ENCODE measurements at regions of chr10 and their contacts with region 1.

Region 1: DNA sequence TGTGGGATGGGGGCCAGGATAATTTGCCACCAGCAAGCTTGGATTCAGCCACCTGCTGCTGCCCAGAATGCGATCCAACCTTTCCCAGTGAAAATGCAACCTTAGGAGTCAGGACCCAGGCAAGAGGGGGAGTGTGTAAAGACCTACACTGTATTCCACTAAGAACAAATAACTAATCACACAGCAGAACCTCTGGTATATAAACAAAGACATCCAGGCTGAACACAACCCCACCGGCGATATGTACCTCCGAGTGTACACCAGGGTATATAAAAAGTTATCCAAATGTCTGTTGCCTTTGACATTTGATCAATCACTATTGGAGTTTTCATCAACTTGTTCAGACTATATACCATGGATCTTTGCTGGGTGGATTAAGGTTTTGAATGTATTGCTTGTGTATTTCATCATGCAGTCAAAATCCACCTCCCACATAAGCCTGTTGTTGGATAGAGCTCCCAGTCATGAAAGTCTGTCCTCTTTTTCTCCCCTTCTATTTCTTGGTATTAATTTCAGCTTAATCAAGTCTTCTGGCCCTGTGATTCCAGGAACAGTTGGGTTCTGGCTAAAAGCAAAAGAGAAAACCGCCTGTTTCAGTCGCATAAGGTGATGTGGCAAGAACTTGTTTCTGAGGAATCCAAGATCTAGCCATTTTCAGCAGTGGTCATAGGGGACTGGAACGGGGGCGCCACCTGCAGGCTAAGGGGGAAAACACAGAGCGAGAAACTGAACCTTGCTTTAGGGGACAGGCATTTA is 290.7 kb downstream of the CCDC3 start:
- DNase-seq: peak; percentile 74
- H3K4me3 Mint-ChIP-seq: no peak overlapping the region
- H3K27ac Mint-ChIP-seq: peak overlapping the region; percentile 76
- H3K4me1 Mint-ChIP-seq: peaks cover 65% of the 10 kb centered on the region
- H3K27me3 Mint-ChIP-seq: no peaks in the 10 kb centered on the region

Region 2: DNA sequence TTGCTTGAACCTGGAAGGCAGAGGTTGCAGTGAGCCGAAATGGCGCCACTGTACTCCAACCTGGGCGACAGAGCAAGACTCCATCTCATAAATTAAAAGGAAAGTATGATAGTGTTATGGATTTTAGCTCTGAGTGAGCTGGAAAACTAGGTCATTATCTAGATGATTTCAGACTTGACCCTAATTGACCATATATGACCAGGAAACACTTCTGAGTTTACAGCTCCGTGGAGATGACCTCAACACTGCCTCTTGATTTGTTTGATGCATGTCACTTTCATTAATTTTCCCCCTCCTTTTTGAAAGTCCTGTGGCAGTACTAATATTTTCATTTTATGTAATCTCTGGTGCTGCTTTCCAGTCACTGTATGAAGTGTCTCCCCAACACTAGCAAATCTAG is 589.1 kb before region 1 on chr10:
- intact Hi-C with region 1: loop called (anchors 5 kb)
- DNase-seq: no peak
- H3K4me3 Mint-ChIP-seq: peak overlapping the region; percentile 59
- H3K27ac Mint-ChIP-seq: peak overlapping the region; percentile 95
- H3K4me1 Mint-ChIP-seq: peaks cover 34% of the 10 kb centered on the region
- H3K27me3 Mint-ChIP-seq: no peaks in the 10 kb centered on the region

Region 3: DNA sequence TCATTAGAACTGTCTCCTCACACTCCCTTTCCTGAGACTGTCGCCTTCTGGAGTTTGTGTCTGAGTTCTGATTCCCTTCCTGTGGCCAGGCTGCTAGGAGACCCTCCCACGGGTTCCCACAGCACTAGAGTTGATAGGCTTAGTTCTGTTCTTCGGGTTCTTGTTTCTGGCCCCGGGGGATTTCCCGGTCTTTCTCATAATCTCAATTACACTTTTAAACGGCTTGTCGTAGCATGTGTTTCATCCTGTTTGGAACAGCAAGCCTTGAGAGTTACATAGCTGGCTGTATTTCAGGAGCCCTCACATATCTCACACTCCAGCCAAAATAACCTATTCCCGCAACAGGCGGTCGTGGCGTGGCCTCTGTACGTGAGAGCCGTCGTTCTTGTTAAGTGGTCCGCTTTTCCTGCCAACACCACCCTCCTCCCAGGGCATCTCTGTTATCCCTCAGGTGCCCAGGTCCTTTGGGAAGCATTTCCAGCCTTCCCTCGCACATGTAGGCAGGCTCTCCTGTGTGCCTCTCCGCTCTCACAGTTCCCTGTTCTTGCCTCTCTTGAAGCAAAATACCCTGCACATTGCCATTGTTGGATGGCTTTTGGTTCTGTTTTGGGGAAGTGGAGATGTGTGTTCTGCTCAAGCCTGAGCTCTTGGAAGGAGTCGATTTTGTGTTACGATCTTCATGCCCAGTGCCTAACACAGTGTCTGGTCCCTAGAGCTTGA is 468.8 kb before region 1 on chr10:
- intact Hi-C with region 1: loop called (anchors 2 kb)
- DNase-seq: no peak
- H3K4me3 Mint-ChIP-seq: peak overlapping the region; percentile 59
- H3K27ac Mint-ChIP-seq: peak overlapping the region; percentile 80
- H3K4me1 Mint-ChIP-seq: peaks cover 26% of the 10 kb centered on the region
- H3K27me3 Mint-ChIP-seq: no peaks in the 10 kb centered on the region

Region 4: DNA sequence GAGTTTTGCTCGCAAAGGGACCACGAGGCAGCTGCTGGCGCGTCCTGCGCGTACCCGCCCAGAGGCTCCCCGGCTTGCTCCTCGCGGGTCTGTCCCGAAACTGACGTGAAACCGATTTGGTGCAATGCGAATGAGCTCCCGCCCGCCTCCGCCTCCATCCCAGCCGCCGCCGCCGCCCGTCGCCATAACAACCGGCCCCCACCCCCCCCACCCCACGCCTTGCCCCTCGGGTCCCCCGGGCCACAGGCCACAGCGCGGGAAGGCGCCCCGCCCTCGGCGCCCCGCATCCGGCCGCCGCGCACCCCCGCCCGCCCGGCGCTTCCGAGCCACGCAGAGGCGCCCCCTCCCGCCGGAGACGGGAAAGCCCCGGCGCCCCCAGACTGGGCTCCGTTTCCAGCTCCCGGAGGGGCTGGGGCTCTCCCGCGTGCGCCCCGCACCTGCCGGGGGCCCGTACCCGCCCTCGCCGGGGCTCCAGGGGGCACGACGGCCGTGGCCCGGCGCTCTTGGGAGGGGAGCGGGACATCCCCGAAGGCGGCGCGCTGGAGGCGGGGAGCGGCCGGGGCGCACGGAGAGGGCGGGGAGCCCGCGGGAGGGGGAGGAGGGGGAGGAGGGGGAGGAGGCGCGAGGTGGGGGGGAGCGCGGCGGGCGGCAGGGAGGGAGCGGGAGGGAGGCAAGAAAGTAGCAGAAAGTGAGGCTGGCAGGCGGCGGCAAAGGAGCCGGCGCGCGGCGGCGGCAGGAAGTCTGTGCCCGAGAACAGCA is 361.7 kb before region 1 on chr10 and contains the start of gene CAMK1D:
- intact Hi-C with region 1: loop called (anchors 1 kb)
- DNase-seq: peak; percentile 79
- H3K4me3 Mint-ChIP-seq: peak within 1 kb of the TSS; percentile 90
- H3K27ac Mint-ChIP-seq: peak within 1 kb of the TSS; percentile 97
- H3K4me1 Mint-ChIP-seq: peaks cover 37% of the 10 kb centered on the region
- H3K27me3 Mint-ChIP-seq: peaks cover 60% of the 10 kb centered on the region
- total RNA-seq, gene CAMK1D: 6.8 and 7.4 TPM in 2 replicates

Region 5: GRCh38 chr10:12594448-12594944 is 116.3 kb before region 1 on chr10:
- intact Hi-C with region 1: loop called (anchors 5 kb)
- DNase-seq: peak; percentile 64
- H3K4me3 Mint-ChIP-seq: peak overlapping the region; percentile 45
- H3K27ac Mint-ChIP-seq: peak overlapping the region; percentile 90
- H3K4me1 Mint-ChIP-seq: peaks cover 95% of the 10 kb centered on the region
- H3K27me3 Mint-ChIP-seq: no peaks in the 10 kb centered on the region

Region 6: DNA sequence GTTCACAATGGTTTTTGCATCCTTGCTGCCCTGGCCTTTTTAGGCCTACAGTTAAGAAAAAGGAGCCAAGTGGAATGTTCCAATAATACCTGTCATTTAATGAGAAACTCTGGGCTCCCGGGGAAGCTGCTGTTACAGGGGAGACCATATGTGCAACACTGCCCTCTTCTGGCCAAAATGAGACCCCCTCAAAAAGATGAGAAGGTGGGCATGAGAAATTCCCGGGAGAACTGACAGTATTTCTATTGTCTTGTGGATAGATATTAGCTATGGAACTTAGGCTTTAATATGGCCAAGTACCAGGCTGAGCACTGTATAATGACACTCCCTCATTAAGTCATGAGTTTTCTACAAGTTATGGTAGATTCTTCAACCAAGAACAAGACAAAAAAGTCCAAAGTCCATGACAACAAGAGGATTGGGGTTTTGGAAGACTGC is 191.4 kb after region 1 on chr10:
- intact Hi-C with region 1: loop called (anchors 1 kb)
- DNase-seq: peak; percentile 25
- H3K4me3 Mint-ChIP-seq: no peak overlapping the region
- H3K27ac Mint-ChIP-seq: no peak overlapping the region
- H3K4me1 Mint-ChIP-seq: no peaks in the 10 kb centered on the region
- H3K27me3 Mint-ChIP-seq: no peaks in the 10 kb centered on the region

Region 7: DNA sequence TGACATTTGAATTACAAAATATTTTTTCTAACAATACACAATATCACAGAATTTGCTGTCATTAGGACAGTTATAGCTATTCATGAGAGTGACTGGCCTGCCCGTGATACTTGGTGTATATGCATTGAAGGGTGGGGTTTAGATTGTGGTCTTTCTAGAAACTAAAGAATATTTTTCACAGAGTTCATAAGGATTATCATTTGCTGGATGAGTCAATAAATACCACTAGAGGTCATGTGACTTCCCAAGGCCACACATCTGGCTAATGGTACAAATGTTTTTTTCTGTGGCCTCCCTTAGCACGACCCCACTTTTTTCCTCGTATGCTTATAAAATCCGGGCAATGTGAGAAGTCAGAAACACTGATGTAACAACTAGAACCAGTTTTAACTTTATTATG is 394.4 kb after region 1 on chr10:
- intact Hi-C with region 1: no loop called
- DNase-seq: no peak
- H3K4me3 Mint-ChIP-seq: no peak overlapping the region
- H3K27ac Mint-ChIP-seq: no peak overlapping the region
- H3K4me1 Mint-ChIP-seq: peaks cover 72% of the 10 kb centered on the region
- H3K27me3 Mint-ChIP-seq: no peaks in the 10 kb centered on the region